HEK293 (cell line): ENCODE measurements at regions of chr9 and their contacts with region 1.

Region 1: GRCh38 chr9:101458955-101459631 is 23.5 kb upstream of the ALDOB start:
- H3K4me3 ChIP-seq: no peak overlapping the region
- H3K27ac ChIP-seq: no peak overlapping the region
- H3K4me1 ChIP-seq: no peaks in the 10 kb centered on the region
- CTCF ChIP-seq: peak; percentile 39; the same call in 1 of the 2 replicates

Region 2: DNA sequence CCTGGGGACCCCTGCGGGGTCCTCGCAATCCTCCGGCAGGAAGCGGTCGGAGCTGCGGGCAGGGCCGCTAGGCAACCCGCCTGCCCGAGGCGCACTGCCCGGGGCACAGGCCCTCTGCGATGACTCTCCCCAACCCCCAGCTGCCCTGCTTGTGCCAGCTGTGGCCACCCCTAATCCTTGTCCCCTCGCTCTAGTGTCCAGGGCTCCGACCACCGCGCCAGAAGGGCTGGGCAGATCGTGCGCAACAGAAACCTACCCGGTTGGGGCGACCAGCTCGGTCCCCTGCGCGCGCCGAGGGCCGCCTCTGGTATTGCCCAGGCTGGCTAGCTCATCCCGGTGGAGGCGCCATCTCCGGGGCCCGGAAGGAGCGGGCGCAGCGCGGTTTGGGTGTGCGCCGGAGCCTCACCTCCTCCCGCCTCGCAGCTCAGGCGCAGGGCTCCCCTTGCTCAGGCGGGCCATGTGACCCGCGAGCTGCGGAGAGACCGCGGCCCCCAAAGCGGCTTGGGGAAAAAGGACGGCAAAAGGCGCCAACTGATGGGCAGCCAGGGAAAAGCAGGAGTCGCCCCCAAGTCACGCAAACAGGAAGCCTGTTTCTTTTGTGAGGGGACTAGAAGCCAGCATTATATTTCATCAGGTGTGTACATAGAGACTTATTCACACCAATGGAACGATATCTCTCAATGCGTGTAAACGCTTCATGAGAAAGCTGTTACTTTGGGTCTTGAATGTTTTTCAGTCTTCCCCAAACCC is 27.8 kb after region 1 on chr9:
- CTCF ChIA-PET with region 1: interaction called, 21 read pairs
- POLR2A ChIA-PET with region 1: no interaction called
- H3K4me3 ChIP-seq: peak overlapping the region; percentile 53
- H3K27ac ChIP-seq: peak overlapping the region; percentile 72; the same call in 1 of the 2 replicates
- H3K4me1 ChIP-seq: no peaks in the 10 kb centered on the region
- CTCF ChIP-seq: peak; percentile 73

Region 3: GRCh38 chr9:101527066-101527465 is 68.0 kb after region 1 on chr9:
- CTCF ChIA-PET with region 1: interaction called, 396 read pairs
- POLR2A ChIA-PET with region 1: interaction called, 3 read pairs
- H3K4me3 ChIP-seq: no peak overlapping the region
- H3K27ac ChIP-seq: no peak overlapping the region
- H3K4me1 ChIP-seq: no peaks in the 10 kb centered on the region
- CTCF ChIP-seq: no peak

Region 4: DNA sequence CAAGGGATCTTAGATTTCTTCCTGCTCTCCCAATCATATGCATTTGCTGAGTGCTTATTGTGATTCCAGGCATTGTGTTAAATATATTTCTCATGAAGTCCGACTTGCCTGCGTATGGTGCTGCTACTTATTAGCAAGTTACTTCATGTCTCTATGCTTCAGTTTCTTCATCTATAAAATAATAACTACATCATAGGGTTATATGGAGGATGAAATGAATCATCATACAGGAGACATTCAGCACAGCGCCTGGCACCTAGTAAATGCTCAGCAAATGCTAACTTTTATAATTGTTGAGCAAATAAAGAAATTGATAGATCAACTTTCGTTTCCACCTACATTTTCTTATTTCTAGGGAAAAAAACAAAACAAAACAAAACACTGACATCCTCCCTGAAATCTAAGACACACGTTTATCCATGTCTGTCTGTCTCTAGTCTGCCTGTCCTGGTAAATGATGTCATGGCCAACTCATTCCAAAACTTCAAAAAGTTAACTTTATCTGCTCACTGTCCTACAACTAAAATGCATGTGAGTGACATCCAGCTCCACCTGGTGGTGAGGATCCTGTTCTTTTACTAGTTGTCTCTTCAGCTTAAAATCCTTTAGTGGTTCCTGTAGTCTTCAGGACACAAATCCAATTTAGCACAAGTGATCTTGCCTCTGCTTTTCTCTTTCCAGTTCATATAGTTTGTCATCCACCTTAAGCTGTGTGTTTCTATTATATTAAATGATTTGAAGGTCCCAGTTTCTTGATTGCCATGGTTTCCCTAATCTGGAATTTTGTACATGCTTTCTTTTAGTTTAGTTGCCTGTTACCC is 108.0 kb after region 1 on chr9:
- CTCF ChIA-PET with region 1: interaction called, 23 read pairs
- POLR2A ChIA-PET with region 1: no interaction called
- H3K4me3 ChIP-seq: no peak overlapping the region
- H3K27ac ChIP-seq: no peak overlapping the region
- H3K4me1 ChIP-seq: no peaks in the 10 kb centered on the region
- CTCF ChIP-seq: no peak